Panc1 (cell line): ENCODE measurements at regions of chr2 and their contacts with region 1.

Region 1: GRCh38 chr2:37005118-37005868 is 39.0 kb upstream of the STRN start:
- DNase-seq: peak; percentile 20
- ATAC-seq: peak; percentile 91
- H3K4me3 ChIP-seq: no peak overlapping the region
- H3K27ac ChIP-seq: no peak overlapping the region
- H3K4me1 ChIP-seq: no peaks in the 10 kb centered on the region
- H3K27me3 ChIP-seq: no peaks in the 10 kb centered on the region
- CTCF ChIP-seq: peak; percentile 84

Region 2: DNA sequence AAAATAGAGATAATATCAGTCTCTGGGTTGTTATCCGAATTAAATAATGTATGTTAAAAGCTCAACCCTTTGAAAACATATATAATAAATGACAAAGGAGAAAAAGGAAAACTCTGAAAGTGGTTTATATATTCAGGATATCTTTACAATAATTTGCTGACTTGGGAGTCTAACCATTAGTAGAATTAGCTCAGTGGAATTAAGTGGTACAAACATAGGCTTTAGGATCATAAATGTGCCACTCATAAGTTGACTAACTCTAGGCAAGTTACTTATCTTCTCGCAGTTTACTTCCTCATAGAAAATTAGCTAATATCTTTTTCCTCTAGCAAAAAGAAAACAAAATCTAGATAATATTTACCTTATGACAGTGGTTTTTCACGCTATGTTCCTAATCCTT is 34.3 kb after region 1 on chr2:
- CTCF ChIA-PET with region 1: interaction called, 13 read pairs
- POLR2A ChIA-PET with region 1: no interaction called
- in situ Hi-C with region 1: no loop called
- intact Hi-C with region 1: no loop called
- DNase-seq: no peak
- ATAC-seq: no peak
- H3K4me3 ChIP-seq: no peak overlapping the region
- H3K27ac ChIP-seq: no peak overlapping the region
- H3K4me1 ChIP-seq: no peaks in the 10 kb centered on the region
- H3K27me3 ChIP-seq: no peaks in the 10 kb centered on the region
- CTCF ChIP-seq: no peak